RWPE1 (cell line): ENCODE measurements at regions of chr17 and their contacts with region 1.

Region 1: DNA sequence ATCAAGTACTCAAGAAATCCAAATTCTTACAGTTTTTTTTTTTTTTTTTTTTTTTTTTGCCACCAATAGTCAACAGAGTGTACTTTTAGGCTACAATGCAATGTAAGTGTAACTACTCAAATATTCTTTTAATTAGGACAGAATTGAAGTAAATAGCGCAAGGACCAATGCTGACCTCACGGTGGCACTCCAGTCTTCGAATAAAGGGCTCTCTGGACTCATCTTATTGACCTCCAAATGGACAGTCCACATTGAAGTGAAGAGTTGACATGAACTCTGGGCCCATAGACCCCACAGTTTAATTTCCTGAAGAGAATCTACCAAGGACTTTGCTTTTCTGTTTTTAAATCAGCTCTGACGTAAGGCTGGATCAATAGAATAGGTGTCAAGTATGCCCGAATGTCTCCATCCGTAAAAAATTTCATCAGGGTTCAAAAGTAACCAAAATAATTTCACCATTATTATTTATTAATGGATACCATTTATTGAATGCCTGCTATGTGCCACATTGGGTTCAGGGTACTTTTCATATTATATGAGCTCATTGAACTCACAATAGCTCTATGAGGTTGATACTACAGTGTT is 7.3 kb upstream of the DDX52 start:
- DNase-seq: peak; percentile 39
- H3K27ac ChIP-seq: no peak overlapping the region
- CTCF ChIP-seq: peak; percentile 41

Region 2: GRCh38 chr17:37661400-37662014 is 11.0 kb after region 1 on chr17:
- CTCF ChIA-PET with region 1: interaction called, 12 read pairs
- POLR2A ChIA-PET with region 1: no interaction called
- DNase-seq: no peak
- H3K27ac ChIP-seq: no peak overlapping the region
- CTCF ChIP-seq: no peak

Region 3: GRCh38 chr17:37770631-37771518 is 120.4 kb after region 1 on chr17:
- CTCF ChIA-PET with region 1: interaction called, 27 read pairs
- POLR2A ChIA-PET with region 1: no interaction called
- DNase-seq: peak; percentile 55
- H3K27ac ChIP-seq: no peak overlapping the region
- CTCF ChIP-seq: peak; percentile 66